CD14-positive monocyte (primary cell): ENCODE measurements at regions of chr11 and their contacts with region 1.

Region 1: DNA sequence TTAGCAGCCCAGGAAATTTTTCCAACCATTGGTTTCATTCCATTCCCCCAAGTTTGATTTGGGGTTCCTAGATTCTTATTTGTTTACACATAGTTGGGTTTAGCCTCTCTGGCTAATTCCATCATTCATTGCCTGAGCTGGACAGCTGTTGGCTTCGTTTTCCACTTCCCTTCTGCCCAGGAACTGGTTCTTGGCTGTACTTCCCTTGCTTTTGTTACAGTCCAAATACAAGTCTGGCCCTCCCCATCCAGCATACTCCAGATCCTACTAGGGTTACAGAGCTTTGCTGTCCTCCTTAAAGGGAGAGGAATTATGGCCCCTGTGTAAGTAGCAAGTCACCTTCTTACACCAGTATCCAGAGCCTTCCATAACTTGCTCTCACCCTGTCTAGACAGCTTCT is 356.3 kb downstream of the FAT3 start:
- DNase-seq: no peak
- H3K4me3 ChIP-seq: no peak overlapping the region
- H3K4me3 Mint-ChIP-seq: no peak overlapping the region
- H3K27ac ChIP-seq: no peak overlapping the region
- H3K27ac Mint-ChIP-seq: no peak overlapping the region
- H3K4me1 ChIP-seq: no peaks in the 10 kb centered on the region
- H3K4me1 Mint-ChIP-seq: no peaks in the 10 kb centered on the region
- H3K27me3 ChIP-seq: no peaks in the 10 kb centered on the region
- H3K27me3 Mint-ChIP-seq: peaks cover 0 to 1% (median 1%) of the 10 kb centered on the region in 3 donors
- CTCF ChIP-seq: no peak

Region 2: DNA sequence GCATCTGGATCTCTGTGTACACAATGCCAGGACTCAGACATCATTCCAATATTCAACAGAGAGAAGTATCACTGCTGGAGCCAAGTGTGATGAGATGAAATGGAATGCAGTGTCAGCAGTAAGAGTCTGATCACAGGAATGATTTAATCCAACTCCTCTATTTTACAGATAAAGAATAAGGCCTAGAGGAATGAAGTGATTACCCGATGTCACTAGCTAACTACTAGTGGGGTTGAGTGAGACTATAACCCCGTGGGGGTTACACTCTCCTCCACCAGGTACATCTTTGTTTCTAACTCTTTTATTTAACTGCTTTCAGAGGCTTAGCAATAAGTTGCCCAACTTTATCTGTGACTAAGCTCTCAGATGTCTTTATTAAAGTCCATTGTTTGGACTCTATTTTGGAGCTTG is 450.5 kb before region 1 on chr11:
- intact Hi-C with region 1: no loop called
- DNase-seq: no peak
- H3K4me3 ChIP-seq: no peak overlapping the region
- H3K4me3 Mint-ChIP-seq: no peak overlapping the region
- H3K27ac ChIP-seq: no peak overlapping the region
- H3K27ac Mint-ChIP-seq: no peak overlapping the region
- H3K4me1 ChIP-seq: no peaks in the 10 kb centered on the region
- H3K4me1 Mint-ChIP-seq: no peaks in the 10 kb centered on the region
- H3K27me3 ChIP-seq: no peaks in the 10 kb centered on the region
- H3K27me3 Mint-ChIP-seq: peaks cover 0 to 2% (median 0%) of the 10 kb centered on the region in 3 donors
- CTCF ChIP-seq: no peak

Region 3: GRCh38 chr11:92540096-92540495 is 40.8 kb before region 1 on chr11:
- intact Hi-C with region 1: no loop called
- DNase-seq: no peak
- H3K4me3 ChIP-seq: no peak overlapping the region
- H3K4me3 Mint-ChIP-seq: no peak overlapping the region
- H3K27ac ChIP-seq: no peak overlapping the region
- H3K27ac Mint-ChIP-seq: no peak overlapping the region
- H3K4me1 ChIP-seq: no peaks in the 10 kb centered on the region
- H3K4me1 Mint-ChIP-seq: peaks cover 5% of the 10 kb centered on the region
- H3K27me3 ChIP-seq: no peaks in the 10 kb centered on the region
- H3K27me3 Mint-ChIP-seq: no peaks in the 10 kb centered on the region
- CTCF ChIP-seq: no peak

Region 4: DNA sequence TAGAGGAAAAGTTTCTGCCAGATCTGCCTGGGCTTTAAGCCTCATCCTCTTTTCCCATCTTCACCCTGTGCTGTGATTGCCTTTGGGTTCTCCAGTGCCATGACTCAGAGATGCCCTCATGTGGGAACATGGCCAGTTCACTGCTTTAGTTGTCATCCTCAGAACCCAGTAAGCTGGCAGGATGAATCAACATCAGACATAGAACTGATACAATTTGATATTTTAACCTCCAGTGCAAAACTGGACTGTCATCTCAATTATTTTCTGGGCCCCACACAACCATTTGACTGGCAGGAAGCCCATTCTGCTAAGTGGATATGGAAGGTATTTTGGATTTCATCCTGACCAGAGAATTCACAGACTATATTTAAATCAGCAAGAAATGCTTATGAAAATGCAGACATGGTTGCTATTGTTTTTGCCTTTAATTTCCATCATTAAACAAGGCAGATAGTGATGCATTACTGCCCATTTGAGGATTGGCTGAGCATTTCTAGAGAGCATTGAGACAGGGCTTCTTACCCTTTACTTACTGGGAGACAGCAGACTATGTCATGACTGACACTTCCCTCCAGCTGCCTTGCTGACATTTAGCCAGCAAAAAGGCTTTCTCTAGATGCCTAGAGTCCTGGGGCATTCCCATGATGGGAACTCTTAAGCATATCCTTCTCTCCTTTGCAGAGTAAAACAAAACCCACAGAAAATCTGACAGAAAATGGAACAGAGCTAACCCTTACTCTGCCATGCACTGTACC is 61.4 kb after region 1 on chr11:
- intact Hi-C with region 1: loop called in 1 of 2 experiments (anchors 10 kb)
- DNase-seq: no peak
- H3K4me3 ChIP-seq: no peak overlapping the region
- H3K4me3 Mint-ChIP-seq: no peak overlapping the region
- H3K27ac ChIP-seq: no peak overlapping the region
- H3K27ac Mint-ChIP-seq: no peak overlapping the region
- H3K4me1 ChIP-seq: no peaks in the 10 kb centered on the region
- H3K4me1 Mint-ChIP-seq: no peaks in the 10 kb centered on the region
- H3K27me3 ChIP-seq: no peaks in the 10 kb centered on the region
- H3K27me3 Mint-ChIP-seq: no peaks in the 10 kb centered on the region
- CTCF ChIP-seq: no peak

Region 5: DNA sequence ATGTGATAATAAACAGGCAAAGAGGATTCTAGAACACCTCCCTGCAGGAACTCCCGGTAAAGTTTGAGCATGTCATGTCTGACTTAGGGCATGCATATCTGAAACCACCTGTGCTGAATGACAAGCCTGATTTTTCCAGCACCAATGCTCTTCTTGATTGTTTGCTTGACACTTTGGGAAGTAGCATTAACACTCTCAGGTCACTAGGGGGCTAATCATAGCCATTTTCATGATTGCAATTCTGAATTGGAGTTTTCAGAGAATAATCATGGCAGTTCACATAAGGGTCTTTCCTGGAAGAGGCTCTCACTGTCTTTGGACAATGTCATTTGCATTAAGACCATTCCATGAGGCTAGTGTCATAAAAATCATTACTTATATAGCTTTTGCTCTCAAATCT is 154.1 kb after region 1 on chr11:
- intact Hi-C with region 1: no loop called
- DNase-seq: no peak
- H3K4me3 ChIP-seq: no peak overlapping the region
- H3K4me3 Mint-ChIP-seq: no peak overlapping the region
- H3K27ac ChIP-seq: no peak overlapping the region
- H3K27ac Mint-ChIP-seq: no peak overlapping the region
- H3K4me1 ChIP-seq: no peaks in the 10 kb centered on the region
- H3K4me1 Mint-ChIP-seq: no peaks in the 10 kb centered on the region
- H3K27me3 ChIP-seq: no peaks in the 10 kb centered on the region
- H3K27me3 Mint-ChIP-seq: peaks cover 0 to 3% (median 0%) of the 10 kb centered on the region in 3 donors
- CTCF ChIP-seq: no peak